ENCODE measurements at regions of chr3 and their contacts with region 1.

Region 1: DNA sequence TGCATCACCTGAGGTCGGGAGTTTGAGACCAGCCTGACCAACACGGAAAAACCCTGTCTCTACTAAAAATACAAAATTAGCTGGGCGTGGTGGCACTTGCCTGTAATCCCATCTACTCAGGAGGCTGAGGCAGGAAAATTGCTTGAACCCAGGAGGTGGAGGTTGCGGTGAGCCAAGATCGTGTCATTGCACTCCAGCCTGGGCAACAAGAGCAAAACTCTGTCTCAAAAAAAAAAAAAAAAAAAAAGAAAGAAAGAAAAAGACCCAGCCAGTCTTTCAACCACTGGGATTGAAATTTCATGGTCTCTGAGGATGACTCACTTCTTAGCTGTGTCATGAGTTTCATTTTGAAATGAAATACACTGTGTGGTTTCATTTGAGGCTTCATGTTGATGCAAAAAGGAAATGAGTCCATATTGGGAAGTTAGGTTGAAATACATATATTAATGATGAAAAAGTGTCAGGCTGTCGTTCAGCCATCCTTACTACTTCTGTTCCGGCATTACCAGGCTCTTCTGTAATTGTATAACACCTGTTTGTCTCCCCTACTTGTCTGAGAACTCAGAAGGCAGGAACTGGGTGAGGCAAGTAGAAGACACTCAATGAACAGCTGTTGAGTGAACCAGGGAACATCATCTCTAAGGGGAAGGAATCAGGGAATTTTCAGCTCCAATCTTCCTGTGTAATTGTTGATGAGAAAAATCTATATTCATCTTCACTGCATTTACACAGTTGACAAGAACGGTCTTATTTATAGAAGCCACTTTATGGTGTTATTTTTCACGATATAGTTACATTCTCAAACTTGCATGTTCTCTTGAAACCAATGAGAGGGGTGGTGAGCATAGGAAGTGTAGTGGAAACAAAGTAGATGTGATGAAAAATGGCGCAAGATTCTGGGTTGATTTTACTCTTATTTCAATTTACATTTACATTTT is 87.4 kb downstream of the NFKBIZ start:
- DNase-seq: peak; percentile 33
- H3K4me3 Mint-ChIP-seq: peak overlapping the region; percentile 0
- H3K27ac Mint-ChIP-seq: peak overlapping the region; percentile 57
- H3K4me1 Mint-ChIP-seq: peaks cover 32% of the 10 kb centered on the region
- H3K27me3 Mint-ChIP-seq: peaks cover 2% of the 10 kb centered on the region

Region 2: DNA sequence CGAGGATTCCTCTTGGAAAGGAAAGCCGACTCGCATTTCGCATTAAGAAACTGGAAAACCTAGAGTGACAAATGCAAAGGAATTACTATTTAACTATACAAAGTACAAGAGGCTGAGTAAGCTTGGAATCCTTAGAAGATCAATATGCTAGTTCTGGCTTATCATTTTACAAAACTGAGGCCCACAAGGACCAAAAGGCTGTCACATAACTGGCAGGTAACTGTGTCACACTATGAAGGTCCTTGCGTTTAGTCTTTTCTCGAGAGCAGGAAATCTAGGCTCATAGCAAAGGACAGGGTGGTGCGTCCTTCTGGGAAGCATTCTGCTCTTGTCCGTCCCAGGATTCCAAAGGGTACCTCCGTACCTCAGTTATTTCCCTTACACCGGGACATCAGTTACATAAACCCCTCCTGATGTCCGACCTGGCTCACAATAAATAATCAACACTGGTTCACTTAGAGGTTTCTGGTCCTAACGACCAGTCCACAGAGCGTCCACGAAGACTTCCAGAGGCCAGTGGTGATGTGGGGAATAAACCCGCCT is 250.7 kb before region 1 on chr3:
- CTCF ChIA-PET with region 1: no interaction called
- intact Hi-C with region 1: loop called (anchors 5 kb)
- DNase-seq: no peak
- H3K4me3 Mint-ChIP-seq: peak overlapping the region; percentile 98
- H3K27ac Mint-ChIP-seq: peak overlapping the region; percentile 99
- H3K4me1 Mint-ChIP-seq: peaks cover 54% of the 10 kb centered on the region
- H3K27me3 Mint-ChIP-seq: no peaks in the 10 kb centered on the region

Region 3: GRCh38 chr3:101827211-101828174 is 109.2 kb before region 1 on chr3:
- CTCF ChIA-PET with region 1: no interaction called
- intact Hi-C with region 1: loop called (anchors 1 kb)
- DNase-seq: peak; percentile 94
- H3K4me3 Mint-ChIP-seq: peak overlapping the region; percentile 77
- H3K27ac Mint-ChIP-seq: peak overlapping the region; percentile 94
- H3K4me1 Mint-ChIP-seq: peaks cover 60% of the 10 kb centered on the region
- H3K27me3 Mint-ChIP-seq: no peaks in the 10 kb centered on the region

Region 4: DNA sequence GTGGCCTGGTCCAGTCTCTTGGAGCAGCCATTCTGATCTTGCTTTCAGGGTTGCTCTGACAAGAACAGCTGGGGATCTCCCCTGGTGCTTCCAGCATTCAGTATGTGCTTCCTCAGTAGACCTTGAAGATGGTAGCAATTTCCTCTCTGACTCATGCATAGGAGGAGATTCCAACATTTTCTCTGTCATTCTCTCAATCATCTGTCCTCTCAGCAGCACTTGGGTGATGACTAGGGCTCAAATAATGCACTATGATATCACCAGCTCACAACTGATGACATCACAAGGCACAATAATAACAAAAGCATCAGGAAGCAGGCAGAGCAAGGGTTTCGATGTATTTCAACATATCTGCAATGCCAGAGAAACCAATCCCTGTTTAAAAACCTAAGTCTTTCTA is 34.6 kb before region 1 on chr3:
- CTCF ChIA-PET with region 1: no interaction called
- intact Hi-C with region 1: loop called (anchors 1 kb)
- DNase-seq: peak; percentile 69
- H3K4me3 Mint-ChIP-seq: no peak overlapping the region
- H3K27ac Mint-ChIP-seq: no peak overlapping the region
- H3K4me1 Mint-ChIP-seq: peaks cover 17% of the 10 kb centered on the region
- H3K27me3 Mint-ChIP-seq: no peaks in the 10 kb centered on the region

Region 5: DNA sequence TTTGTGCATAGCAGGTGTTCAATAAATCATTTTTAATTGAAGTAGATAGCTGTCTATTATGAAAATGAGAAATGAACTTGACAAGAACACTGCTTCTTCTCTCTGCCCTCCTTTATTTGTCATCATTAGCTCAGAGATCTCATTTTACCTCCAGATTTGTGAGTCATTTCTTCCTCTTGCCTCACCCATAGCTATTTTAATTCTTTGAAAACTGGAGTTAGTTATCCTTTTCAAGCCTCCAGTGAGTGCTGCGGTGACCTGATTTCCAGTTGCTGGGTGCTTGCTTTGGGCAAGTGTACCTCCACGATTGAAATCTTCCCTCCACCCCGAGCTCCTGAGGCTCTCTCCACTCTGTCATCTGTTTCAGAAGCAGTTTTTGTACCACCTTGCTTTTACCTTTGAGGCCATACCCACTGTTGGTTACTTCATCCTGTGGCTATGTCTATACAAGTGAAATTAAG is 27.2 kb after region 1 on chr3:
- CTCF ChIA-PET with region 1: interaction called, 6 read pairs
- intact Hi-C with region 1: loop called (anchors 1 kb)
- DNase-seq: peak; percentile 77
- H3K4me3 Mint-ChIP-seq: peak overlapping the region; percentile 27
- H3K27ac Mint-ChIP-seq: peak overlapping the region; percentile 80
- H3K4me1 Mint-ChIP-seq: peaks cover 31% of the 10 kb centered on the region
- H3K27me3 Mint-ChIP-seq: no peaks in the 10 kb centered on the region

Region 6: DNA sequence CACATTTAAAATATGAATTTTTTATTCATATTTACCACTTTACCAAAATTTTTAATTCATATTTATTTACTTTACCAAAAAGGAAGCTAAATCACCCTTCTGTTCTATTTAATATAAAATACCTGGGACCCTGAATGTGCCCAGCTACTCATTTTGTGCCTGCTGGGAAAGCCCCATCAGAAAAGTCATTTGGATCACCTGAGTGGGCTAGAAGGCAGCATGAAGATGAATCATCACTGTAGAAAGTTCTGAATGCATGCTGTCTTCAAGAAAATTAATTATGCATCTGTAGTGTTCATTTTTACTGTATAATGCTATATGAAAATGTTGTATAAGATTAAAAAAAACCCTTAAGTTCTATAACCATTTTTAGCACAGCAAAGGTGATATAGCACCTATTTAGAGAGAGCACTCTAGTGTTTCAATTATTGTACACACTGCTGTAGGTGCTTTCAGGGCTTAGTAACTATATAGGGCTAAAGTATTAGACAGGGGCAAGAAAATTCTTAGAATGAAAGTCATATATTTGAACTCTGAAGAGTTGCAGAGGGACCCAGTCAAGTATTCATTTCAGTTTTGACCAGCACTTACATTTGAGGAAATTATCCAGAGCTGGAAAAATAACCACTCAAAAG is 87.7 kb after region 1 on chr3:
- CTCF ChIA-PET with region 1: no interaction called
- intact Hi-C with region 1: loop called (anchors 1 kb)
- DNase-seq: peak; percentile 68
- H3K4me3 Mint-ChIP-seq: no peak overlapping the region
- H3K27ac Mint-ChIP-seq: no peak overlapping the region
- H3K4me1 Mint-ChIP-seq: peaks cover 27% of the 10 kb centered on the region
- H3K27me3 Mint-ChIP-seq: no peaks in the 10 kb centered on the region

Region 7: DNA sequence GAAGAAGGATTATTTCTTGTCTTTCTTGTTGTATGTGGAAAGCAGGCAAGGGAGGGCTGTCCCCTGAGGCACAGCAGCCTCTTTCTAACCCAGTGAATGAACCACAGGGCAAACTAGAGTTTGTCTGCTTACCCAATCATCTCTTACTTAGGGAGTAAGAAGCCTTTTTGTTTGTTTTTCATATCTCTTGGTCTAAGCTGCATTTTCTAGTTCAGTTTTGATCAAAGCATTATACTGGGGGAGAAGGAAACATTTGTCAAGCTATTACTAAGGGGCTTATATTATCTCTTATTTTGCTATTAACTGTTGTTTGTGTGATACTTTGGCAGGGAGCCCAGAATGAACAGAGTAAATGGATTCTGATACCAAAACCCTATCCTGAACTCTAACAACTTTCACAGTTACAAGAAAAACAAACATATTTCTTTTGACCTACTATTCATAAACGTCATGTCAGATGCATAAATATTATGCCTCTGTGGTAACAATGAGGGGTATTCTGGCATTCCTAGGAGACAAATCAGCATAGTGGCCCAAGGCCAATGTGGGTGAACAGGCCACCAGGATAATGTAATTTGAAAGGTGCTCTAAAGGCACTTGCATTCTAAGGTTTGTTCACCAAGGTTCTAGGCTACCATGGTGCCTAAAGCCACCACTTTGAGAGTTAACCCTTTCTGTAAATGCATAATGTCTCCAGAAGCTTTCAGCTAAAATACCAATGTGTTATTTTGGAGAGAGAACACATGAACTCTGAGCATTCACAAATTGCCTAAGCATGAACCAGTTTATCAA is 226.5 kb after region 1 on chr3:
- CTCF ChIA-PET with region 1: no interaction called
- intact Hi-C with region 1: loop called (anchors 2 kb)
- DNase-seq: peak; percentile 31
- H3K4me3 Mint-ChIP-seq: no peak overlapping the region
- H3K27ac Mint-ChIP-seq: peak overlapping the region; percentile 6
- H3K4me1 Mint-ChIP-seq: peaks cover 25% of the 10 kb centered on the region
- H3K27me3 Mint-ChIP-seq: no peaks in the 10 kb centered on the region

Measured in activated naive CD4-positive, alpha-beta T cell treated with anti-CD3 and anti-CD28 coated beads for 36 hours (primary cell).